Activated naive CD4-positive, alpha-beta T cell treated with anti-CD3 and anti-CD28 coated beads for 36 hours (primary cell): ENCODE measurements at regions of chr1 and their contacts with region 1.

Region 1: GRCh38 chr1:40691538-40692428 is at the start of gene NFYC:
- DNase-seq: peak; percentile 99
- H3K4me3 Mint-ChIP-seq: peak within 1 kb of the TSS; percentile 97
- H3K27ac Mint-ChIP-seq: peak within 1 kb of the TSS; percentile 96
- H3K4me1 Mint-ChIP-seq: peaks cover 51% of the 10 kb centered on the region
- H3K27me3 Mint-ChIP-seq: no peaks in the 10 kb centered on the region
- total RNA-seq, gene NFYC: 53.5 to 63.1 TPM

Region 2: DNA sequence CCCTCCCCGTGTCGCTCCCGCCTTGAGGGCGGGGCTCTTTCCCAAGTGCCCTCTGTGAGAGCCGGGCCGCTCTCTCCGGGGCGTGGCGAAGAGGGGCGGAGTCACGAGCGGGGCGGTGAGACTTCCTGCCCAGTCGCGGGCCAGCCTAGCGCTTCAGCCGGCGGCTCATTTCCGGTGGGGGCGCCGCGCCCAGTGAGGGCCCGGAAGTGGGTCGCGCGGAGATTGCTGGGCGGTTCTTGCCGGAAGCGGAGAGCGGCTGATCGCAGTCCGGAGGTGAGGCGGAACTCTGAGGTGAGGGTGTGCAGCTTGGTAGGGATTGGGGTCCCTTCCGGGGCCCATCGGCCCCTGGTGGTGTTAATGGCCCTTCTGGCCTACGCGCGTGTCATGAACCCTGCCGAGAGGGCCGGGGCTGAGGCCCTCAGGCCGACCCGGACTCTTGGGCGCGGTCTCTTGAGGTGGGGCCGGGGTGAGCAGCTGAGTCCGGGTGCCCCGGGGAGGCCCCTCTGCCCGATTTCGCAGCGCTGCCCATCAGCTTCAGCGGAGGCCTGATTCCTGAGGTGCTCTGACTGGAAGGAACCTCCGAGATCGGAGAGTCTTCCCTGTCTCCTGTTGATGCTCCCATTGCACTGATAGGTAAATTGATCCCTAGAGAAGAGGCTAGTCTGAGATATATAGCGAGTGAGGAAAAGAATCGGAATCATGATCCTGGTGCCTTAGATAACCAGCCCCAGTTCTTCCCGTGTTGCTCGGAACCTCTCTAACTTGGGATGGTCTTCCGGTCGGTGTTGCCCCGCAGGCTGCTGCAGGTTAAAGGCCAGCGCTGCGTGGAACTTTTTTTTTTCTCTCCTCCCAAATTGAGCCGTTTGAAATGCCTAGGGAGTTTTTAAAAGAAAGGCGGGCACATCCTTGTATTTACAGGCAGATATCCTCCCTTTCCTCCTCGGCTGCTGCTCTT is 651.0 kb before region 1 on chr1 and contains the start of gene CAP1:
- CTCF ChIA-PET with region 1: no interaction called
- intact Hi-C with region 1: loop called (anchors 5 kb)
- DNase-seq: peak; percentile 100
- H3K4me3 Mint-ChIP-seq: peak within 1 kb of the TSS; percentile 87
- H3K27ac Mint-ChIP-seq: peak within 1 kb of the TSS; percentile 98
- H3K4me1 Mint-ChIP-seq: peaks cover 61% of the 10 kb centered on the region
- H3K27me3 Mint-ChIP-seq: no peaks in the 10 kb centered on the region
- total RNA-seq, gene CAP1: 522 to 525 TPM

Region 3: GRCh38 chr1:40449684-40450494 is 241.9 kb before region 1 on chr1 and contains the start of gene ZFP69B:
- CTCF ChIA-PET with region 1: no interaction called
- intact Hi-C with region 1: loop called (anchors 1 kb)
- DNase-seq: peak; percentile 95
- H3K4me3 Mint-ChIP-seq: peak within 1 kb of the TSS; percentile 80
- H3K27ac Mint-ChIP-seq: peak within 1 kb of the TSS; percentile 93
- H3K4me1 Mint-ChIP-seq: peaks cover 32% of the 10 kb centered on the region
- H3K27me3 Mint-ChIP-seq: no peaks in the 10 kb centered on the region
- total RNA-seq, gene ZFP69B: 11.2 to 11.3 TPM

Region 4: GRCh38 chr1:40668769-40669525 is 22.8 kb before region 1 on chr1:
- CTCF ChIA-PET with region 1: interaction called, 6 read pairs
- intact Hi-C with region 1: loop called (anchors 1 kb)
- DNase-seq: peak; percentile 93
- H3K4me3 Mint-ChIP-seq: peak overlapping the region; percentile 39
- H3K27ac Mint-ChIP-seq: no peak overlapping the region
- H3K4me1 Mint-ChIP-seq: peaks cover 6% of the 10 kb centered on the region
- H3K27me3 Mint-ChIP-seq: no peaks in the 10 kb centered on the region

Region 5: DNA sequence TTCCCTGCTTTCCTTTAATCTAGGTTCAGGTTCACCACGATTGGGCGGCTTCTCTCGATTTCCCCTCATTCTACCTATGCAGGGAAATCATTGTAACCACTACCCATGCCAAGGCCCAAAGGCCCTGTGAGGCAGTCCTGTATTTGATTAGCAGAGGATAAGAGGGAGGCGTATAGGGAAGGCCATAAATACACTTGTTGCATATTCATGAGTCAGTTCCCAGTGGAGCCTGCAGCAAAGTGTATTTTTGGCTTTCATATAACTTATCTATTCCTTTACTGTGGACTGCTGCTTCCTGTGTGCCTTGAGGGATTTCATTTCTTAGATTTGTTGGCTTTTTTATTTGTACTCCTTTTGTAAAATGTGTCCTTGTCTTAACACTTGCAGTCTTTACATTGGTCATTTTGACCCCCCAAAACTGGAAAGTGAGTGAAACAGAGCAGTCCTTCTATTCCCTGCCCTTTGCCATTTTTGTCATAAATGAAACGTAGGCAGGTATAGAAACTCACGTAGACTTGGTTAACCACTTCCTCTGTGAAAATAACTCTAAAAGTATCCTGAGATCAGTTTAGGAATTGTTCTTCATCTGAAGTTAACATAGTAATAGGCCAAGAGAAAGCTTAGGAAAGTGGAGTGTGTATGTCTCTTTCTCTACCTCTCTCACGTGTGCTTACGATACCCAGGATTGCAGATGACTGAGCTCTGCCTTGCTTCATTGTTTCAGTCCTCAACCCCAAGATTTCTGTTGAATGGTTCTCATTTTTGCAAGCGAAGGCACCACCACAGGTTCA is 72.2 kb after region 1 on chr1:
- CTCF ChIA-PET with region 1: no interaction called
- intact Hi-C with region 1: loop called (anchors 1 kb)
- DNase-seq: no peak
- H3K4me3 Mint-ChIP-seq: no peak overlapping the region
- H3K27ac Mint-ChIP-seq: peak overlapping the region; percentile 73
- H3K4me1 Mint-ChIP-seq: peaks cover 34% of the 10 kb centered on the region
- H3K27me3 Mint-ChIP-seq: no peaks in the 10 kb centered on the region

Region 6: GRCh38 chr1:41739061-41739955 is 1047.5 kb after region 1 on chr1:
- CTCF ChIA-PET with region 1: no interaction called
- intact Hi-C with region 1: loop called (anchors 10 kb)
- DNase-seq: peak; percentile 96
- H3K4me3 Mint-ChIP-seq: peak overlapping the region; percentile 73
- H3K27ac Mint-ChIP-seq: peak overlapping the region; percentile 98
- H3K4me1 Mint-ChIP-seq: peaks cover 93% of the 10 kb centered on the region
- H3K27me3 Mint-ChIP-seq: no peaks in the 10 kb centered on the region